ENCODE measurements at regions of chr16 and their contacts with region 1.

Region 1: GRCh38 chr16:28943281-28943680 is 7.5 kb upstream of the NFATC2IP start:
- DNase-seq: no peak
- H3K4me3 ChIP-seq: no peak overlapping the region
- H3K27ac ChIP-seq: no peak overlapping the region
- H3K27me3 ChIP-seq: no peaks in the 10 kb centered on the region
- CTCF ChIP-seq: no peak

Region 2: GRCh38 chr16:28823872-28824716 is 119.2 kb before region 1 on chr16:
- intact Hi-C with region 1: loop called in 1 of 2 experiments (anchors 5 kb)
- DNase-seq: peak; percentile 81 to 98 (median 94)
- H3K4me3 ChIP-seq: peak overlapping the region; percentile 79 to 100 (median 97)
- H3K27ac ChIP-seq: peak overlapping the region; percentile 80 to 100 (median 98)
- H3K27me3 ChIP-seq: no peaks in the 10 kb centered on the region
- CTCF ChIP-seq: peak in 43 of 56 donors; percentile 12 to 63 (median 41)

Region 3: GRCh38 chr16:28863929-28864793 is 79.1 kb before region 1 on chr16:
- intact Hi-C with region 1: no loop called
- DNase-seq: peak in 1 of 10 donors; percentile 23
- H3K4me3 ChIP-seq: peak overlapping the region; percentile 66 to 98 (median 92)
- H3K27ac ChIP-seq: peak overlapping the region in 57 of 59 donors; percentile 72 to 99 (median 96)
- H3K27me3 ChIP-seq: no peaks in the 10 kb centered on the region
- CTCF ChIP-seq: no peak

Region 4: DNA sequence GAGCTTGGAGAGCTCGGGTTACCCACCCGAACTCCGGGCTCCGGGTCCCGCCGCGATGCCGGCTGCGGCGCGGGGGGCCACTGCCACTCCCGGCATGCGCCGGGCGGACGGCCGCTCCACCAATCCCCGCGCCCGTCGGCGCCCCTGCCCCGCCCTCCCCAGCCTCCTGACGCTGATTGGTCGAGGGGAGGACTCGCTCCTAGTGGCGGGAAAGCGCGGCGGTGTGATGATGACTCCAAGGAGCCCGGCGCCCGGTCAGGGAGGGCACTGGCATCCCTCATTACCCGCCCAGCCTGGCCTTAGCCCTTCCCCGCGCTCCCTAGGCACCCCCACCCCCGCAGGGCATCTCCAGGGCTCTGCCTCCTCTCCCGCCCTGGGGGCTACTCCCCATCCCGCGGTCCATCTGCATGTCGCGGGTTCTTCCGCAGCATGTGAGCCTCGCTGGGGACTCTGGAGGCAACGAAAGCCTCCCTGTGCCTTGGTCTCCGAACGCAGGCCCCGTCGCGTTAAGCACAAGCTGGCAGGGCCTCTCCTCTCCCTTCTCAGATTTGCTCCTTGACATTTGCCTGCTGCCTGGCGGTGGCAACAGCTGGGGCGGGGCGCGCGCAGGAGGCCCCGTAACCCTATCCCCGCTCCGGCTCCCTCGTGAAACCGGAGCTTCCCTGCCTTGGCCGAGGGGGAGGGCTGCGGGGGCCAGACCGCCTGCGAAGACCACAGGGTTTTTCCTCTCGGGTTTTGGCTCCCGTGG is 63.3 kb before region 1 on chr16:
- intact Hi-C with region 1: loop called in 1 of 2 experiments (anchors 5 kb)
- DNase-seq: peak; percentile 83 to 90 (median 88)
- H3K4me3 ChIP-seq: peak overlapping the region; percentile 38 to 93 (median 80)
- H3K27ac ChIP-seq: peak overlapping the region in 10 of 59 donors; percentile 9 to 71 (median 32)
- H3K27me3 ChIP-seq: peaks cover 0 to 7% (median 0%) of the 10 kb centered on the region in 45 donors
- CTCF ChIP-seq: peak in 41 of 56 donors; percentile 9 to 57 (median 37)

Region 5: GRCh38 chr16:28974437-28975157 is 31.3 kb after region 1 on chr16 and contains the start of gene SPNS1:
- intact Hi-C with region 1: no loop called
- DNase-seq: peak; percentile 95 to 99 (median 98)
- H3K4me3 ChIP-seq: peak within 1 kb of the TSS; percentile 65 to 100 (median 94)
- H3K27ac ChIP-seq: peak within 1 kb of the TSS; percentile 39 to 96 (median 89)
- H3K27me3 ChIP-seq: no peaks in the 10 kb centered on the region
- CTCF ChIP-seq: peak in 32 of 56 donors; percentile 6 to 53 (median 26)
- total RNA-seq, gene SPNS1: 13.6 to 33.8 (median 21.2) TPM